CD4-positive, alpha-beta T cell (primary cell): ENCODE measurements at regions of chr6 and their contacts with region 1.

Region 1: DNA sequence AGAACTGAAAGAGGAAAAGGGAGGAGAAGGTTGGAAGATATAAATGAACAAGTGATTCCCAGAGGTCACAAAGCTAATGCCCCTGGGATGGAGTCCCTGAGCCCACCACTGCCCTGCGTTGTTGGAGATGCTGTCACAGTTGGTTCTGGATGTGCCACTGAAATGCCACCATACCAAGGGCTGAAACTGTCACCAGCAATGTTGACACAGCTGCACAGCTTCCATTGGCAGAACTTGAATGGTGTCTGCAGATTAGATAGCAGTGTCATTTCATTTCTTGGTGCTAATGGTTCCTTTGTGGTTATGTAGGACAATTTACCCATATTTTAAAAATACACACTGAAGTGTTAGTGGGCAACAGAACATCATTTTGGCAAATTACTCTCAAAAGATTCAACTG is 120.7 kb downstream of the TBXT start:
- DNase-seq: no peak
- ATAC-seq: no peak
- H3K4me3 ChIP-seq: no peak overlapping the region
- H3K4me3 Mint-ChIP-seq: no peak overlapping the region
- H3K27ac ChIP-seq: no peak overlapping the region
- H3K27ac Mint-ChIP-seq: no peak overlapping the region
- H3K4me1 ChIP-seq: no peaks in the 10 kb centered on the region
- H3K4me1 Mint-ChIP-seq: no peaks in the 10 kb centered on the region
- H3K27me3 ChIP-seq: no peaks in the 10 kb centered on the region
- H3K27me3 Mint-ChIP-seq: peaks cover 3% of the 10 kb centered on the region
- CTCF ChIP-seq: no peak

Region 2: GRCh38 chr6:166058064-166058739 is 11.2 kb after region 1 on chr6:
- CTCF ChIA-PET with region 1: no interaction called
- POLR2A ChIA-PET with region 1: no interaction called
- intact Hi-C with region 1: no loop called
- DNase-seq: no peak
- ATAC-seq: no peak
- H3K4me3 ChIP-seq: no peak overlapping the region
- H3K4me3 Mint-ChIP-seq: no peak overlapping the region
- H3K27ac ChIP-seq: no peak overlapping the region
- H3K27ac Mint-ChIP-seq: no peak overlapping the region
- H3K4me1 ChIP-seq: no peaks in the 10 kb centered on the region
- H3K4me1 Mint-ChIP-seq: no peaks in the 10 kb centered on the region
- H3K27me3 ChIP-seq: no peaks in the 10 kb centered on the region
- H3K27me3 Mint-ChIP-seq: peaks cover 20% of the 10 kb centered on the region
- CTCF ChIP-seq: no peak

Region 3: GRCh38 chr6:166068768-166069167 is 21.8 kb after region 1 on chr6:
- CTCF ChIA-PET with region 1: no interaction called
- POLR2A ChIA-PET with region 1: no interaction called
- intact Hi-C with region 1: loop called in 1 of 2 experiments (anchors 1 kb)
- DNase-seq: no peak
- ATAC-seq: no peak
- H3K4me3 ChIP-seq: no peak overlapping the region
- H3K4me3 Mint-ChIP-seq: no peak overlapping the region
- H3K27ac ChIP-seq: no peak overlapping the region
- H3K27ac Mint-ChIP-seq: no peak overlapping the region
- H3K4me1 ChIP-seq: no peaks in the 10 kb centered on the region
- H3K4me1 Mint-ChIP-seq: no peaks in the 10 kb centered on the region
- H3K27me3 ChIP-seq: no peaks in the 10 kb centered on the region
- H3K27me3 Mint-ChIP-seq: no peaks in the 10 kb centered on the region
- CTCF ChIP-seq: no peak

Region 4: GRCh38 chr6:166849749-166850183 is 802.8 kb after region 1 on chr6:
- CTCF ChIA-PET with region 1: no interaction called
- POLR2A ChIA-PET with region 1: no interaction called
- intact Hi-C with region 1: no loop called
- DNase-seq: no peak
- ATAC-seq: no peak
- H3K4me3 ChIP-seq: no peak overlapping the region
- H3K4me3 Mint-ChIP-seq: no peak overlapping the region
- H3K27ac ChIP-seq: no peak overlapping the region
- H3K27ac Mint-ChIP-seq: no peak overlapping the region
- H3K4me1 ChIP-seq: no peaks in the 10 kb centered on the region
- H3K4me1 Mint-ChIP-seq: no peaks in the 10 kb centered on the region
- H3K27me3 ChIP-seq: no peaks in the 10 kb centered on the region
- H3K27me3 Mint-ChIP-seq: no peaks in the 10 kb centered on the region
- CTCF ChIP-seq: no peak